ENCODE measurements at regions of chr9 and their contacts with region 1.

Region 1: DNA sequence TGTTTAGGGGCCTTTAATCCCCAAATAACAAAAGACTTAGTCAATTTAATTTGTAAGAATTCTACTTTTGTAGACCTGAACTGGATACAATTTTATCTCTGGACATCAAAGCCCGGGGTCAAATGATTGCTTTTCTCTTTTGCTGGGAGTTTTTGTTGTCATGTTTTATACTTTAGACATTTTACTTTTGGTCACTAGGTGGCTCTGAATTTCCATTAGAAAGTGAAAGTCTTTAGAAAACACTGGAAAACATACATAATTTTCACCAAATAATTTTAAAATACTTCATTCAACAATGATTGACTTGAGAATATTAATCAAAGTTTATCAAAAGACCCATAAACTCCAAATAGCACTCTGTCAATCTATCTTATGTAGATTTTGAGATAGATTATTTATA is 2.8 kb upstream of the PCA3 start:
- DNase-seq: peak; percentile 7
- ATAC-seq: no peak; the same call in 1 of the 2 replicates
- H3K4me3 ChIP-seq: no peak overlapping the region
- H3K27ac ChIP-seq: no peak overlapping the region
- H3K4me1 ChIP-seq: no peaks in the 10 kb centered on the region
- H3K27me3 ChIP-seq: peaks cover 5% of the 10 kb centered on the region
- CTCF ChIP-seq: peak; percentile 50
- POLR2A ChIP-seq: no peak
- RAD21 ChIP-seq: peak; percentile 35

Region 2: GRCh38 chr9:76987594-76988200 is 226.2 kb after region 1 on chr9:
- CTCF ChIA-PET with region 1: interaction called, 6 read pairs
- POLR2A ChIA-PET with region 1: no interaction called
- dilution Hi-C with region 1: no loop called
- in situ Hi-C with region 1: no loop called
- intact Hi-C with region 1: loop called (anchors 2 kb)
- DNase-seq: peak; percentile 44
- ATAC-seq: peak; percentile 91
- H3K4me3 ChIP-seq: no peak overlapping the region
- H3K27ac ChIP-seq: no peak overlapping the region
- H3K4me1 ChIP-seq: no peaks in the 10 kb centered on the region
- H3K27me3 ChIP-seq: peaks cover 4% of the 10 kb centered on the region
- CTCF ChIP-seq: peak; percentile 73
- POLR2A ChIP-seq: no peak
- RAD21 ChIP-seq: peak; percentile 80

Measured in IMR-90 (cell line).